ENCODE measurements at regions of chr17 and their contacts with region 1.

Region 1: DNA sequence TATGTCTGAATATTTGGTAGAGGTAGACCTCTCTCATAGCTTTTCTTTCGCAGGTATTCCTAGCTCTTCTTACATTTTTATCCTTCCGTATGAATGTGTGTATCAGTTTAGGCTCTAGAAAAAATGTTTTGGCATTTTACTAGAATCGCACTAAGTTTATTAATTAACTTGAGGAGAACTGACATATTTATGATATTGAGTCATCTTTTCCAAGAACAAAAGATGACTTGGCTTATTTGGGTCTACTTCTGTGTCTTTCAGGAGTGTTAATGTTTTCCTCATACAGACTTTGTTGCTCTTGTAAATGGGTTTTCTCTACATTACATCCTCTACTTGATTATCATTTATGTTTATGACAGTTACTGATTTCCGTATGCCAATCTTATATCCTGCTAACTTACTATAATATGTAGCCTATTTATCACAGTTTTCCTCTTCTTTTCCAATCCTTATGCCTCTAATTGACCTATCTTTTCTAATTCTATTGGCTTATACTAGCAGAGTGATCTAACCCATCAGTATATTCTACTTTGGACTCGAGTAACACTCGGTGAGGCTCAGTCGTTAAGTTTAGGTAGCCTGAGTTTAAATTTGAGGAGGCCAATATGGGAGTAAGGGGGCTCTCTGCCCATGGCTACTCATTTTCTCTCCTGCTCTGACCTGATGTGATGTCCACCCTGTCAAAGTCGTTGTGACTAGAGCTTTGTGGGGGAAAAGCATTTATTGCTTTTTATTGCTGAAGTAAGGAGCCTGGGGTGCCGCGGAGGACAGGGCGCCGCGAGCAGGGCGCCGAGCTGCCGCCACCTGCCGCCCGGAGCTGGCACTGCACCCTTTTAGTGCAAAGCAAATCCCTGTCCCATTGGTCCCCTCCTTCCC is 20.0 kb downstream of the ST6GALNAC1 start:
- DNase-seq: peak; percentile 63
- ATAC-seq: peak; percentile 99
- H3K4me3 ChIP-seq: peak overlapping the region; percentile 38 to 47
- H3K27ac ChIP-seq: peak overlapping the region; percentile 1; the same call in 1 of the 2 replicates
- H3K4me1 ChIP-seq: peaks cover 9 to 12% of the 10 kb centered on the region in 2 experiments
- H3K27me3 ChIP-seq: no peaks in the 10 kb centered on the region
- CTCF ChIP-seq: peak; percentile 93 to 99 (median 97)
- POLR2A ChIP-seq: no peak
- RAD21 ChIP-seq: peak; percentile 95

Region 2: DNA sequence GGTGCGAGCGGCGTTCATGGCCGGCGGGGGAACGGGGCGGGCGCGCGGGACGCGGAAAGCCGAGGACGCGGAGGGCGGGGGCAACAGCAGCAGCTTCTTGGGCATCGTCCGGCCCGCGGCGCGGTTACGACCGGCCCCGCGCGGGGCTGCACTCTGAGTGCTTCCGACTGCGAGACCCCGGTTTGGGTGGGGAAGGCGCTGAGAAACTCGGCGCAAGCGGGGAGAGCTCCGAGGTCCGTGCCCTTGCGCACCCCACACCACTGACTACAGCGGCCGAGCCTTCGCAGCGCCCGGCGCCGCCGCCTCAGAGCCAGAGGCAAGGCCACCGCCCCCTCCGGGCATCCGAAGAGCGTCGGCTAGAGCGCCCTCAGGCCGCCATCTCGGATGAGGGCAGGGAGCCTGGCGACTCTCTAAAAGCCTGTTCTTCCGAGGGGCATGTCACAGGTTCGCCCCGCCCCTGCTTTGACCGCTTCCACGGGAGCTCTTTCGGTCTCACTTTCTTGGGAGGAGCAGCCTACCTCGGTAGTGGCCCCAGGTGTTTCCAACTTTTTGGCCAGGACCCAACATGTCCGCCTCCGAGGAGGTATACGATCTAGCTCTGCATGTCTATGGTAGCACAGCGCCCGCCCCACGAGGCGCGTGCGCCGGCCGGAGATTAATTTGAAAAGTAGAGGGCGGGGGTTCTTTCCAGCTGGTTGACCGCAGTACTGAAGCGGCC is 269.8 kb before region 1 on chr17 and contains the start of gene PRPSAP1:
- CTCF ChIA-PET with region 1: no interaction called
- POLR2A ChIA-PET with region 1: no interaction called
- RAD21 ChIA-PET with region 1: no interaction called
- intact Hi-C with region 1: no loop called
- DNase-seq: peak; percentile 93
- ATAC-seq: peak; percentile 96
- H3K4me3 ChIP-seq: peak within 1 kb of the TSS; percentile 93 to 99
- H3K27ac ChIP-seq: peak within 1 kb of the TSS; percentile 89
- H3K4me1 ChIP-seq: peaks cover 0 to 23% of the 10 kb centered on the region in 2 experiments; a peak in 2 of 4 replicates
- H3K27me3 ChIP-seq: no peaks in the 10 kb centered on the region
- CTCF ChIP-seq: peak in 1 of 3 experiments; percentile 62; a peak in 2 of 6 replicates
- POLR2A ChIP-seq: peak; percentile 97
- RAD21 ChIP-seq: no peak; the same call in 1 of the 2 replicates
- total RNA-seq, gene PRPSAP1: 81.4 TPM

Region 3: DNA sequence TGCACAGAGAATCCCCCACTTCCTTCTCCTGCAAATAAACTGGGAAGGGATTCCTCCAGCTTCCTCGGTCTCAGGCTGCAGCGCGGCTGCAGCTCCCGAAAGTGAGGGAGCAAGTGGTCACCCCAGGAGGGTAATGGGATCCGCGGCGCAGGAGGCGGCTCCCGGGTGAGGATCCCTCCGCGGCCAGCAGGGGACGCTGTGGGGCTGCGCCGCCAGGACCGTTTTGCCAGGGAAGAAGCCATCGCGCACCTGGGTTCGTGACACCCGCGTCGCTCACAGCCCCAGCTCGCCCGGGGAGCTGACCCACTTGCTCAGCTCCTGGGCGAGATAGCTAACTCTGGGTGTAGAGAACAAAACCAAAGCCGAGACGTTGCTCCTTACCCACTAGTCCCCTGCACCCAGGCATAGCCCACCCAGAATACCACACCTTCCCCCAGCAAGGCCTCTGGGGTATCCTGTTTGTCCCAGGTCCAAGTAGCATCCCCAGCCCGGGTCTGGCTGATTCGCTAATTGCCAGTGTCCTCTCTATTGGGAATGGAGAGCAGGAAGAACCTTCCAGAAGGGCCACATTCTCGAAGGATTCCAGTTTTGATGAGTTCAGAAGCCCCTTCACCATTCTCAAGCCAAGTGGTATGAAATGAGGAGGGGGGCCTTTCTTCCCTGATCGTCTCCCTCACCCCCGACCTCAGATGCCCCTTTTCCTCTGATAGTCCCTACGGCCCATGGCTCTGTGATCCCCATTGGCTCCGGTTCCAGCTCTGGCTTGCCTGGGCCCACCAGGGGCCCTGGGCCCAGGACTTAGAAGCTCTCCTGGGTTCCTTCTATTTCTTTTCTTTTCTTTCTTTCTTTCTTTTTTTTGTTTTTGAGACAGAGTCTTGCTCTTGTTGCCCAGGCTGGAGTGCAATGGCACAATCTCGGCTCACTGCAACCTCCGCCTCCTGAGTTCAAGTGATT is 100.1 kb before region 1 on chr17:
- CTCF ChIA-PET with region 1: interaction called, 55 read pairs
- POLR2A ChIA-PET with region 1: interaction called, 5 read pairs
- RAD21 ChIA-PET with region 1: interaction called, 4 to 17 read pairs
- intact Hi-C with region 1: loop called (anchors 1 kb)
- DNase-seq: peak; percentile 58
- ATAC-seq: peak; percentile 97
- H3K4me3 ChIP-seq: peak overlapping the region; percentile 1 to 19; a peak in 3 of 4 replicates
- H3K27ac ChIP-seq: no peak overlapping the region
- H3K4me1 ChIP-seq: peaks cover 0 to 20% of the 10 kb centered on the region in 2 experiments; a peak in 3 of 4 replicates
- H3K27me3 ChIP-seq: no peaks in the 10 kb centered on the region
- CTCF ChIP-seq: peak; percentile 97 to 100 (median 100)
- POLR2A ChIP-seq: peak; percentile 28
- RAD21 ChIP-seq: peak; percentile 100

Region 4: DNA sequence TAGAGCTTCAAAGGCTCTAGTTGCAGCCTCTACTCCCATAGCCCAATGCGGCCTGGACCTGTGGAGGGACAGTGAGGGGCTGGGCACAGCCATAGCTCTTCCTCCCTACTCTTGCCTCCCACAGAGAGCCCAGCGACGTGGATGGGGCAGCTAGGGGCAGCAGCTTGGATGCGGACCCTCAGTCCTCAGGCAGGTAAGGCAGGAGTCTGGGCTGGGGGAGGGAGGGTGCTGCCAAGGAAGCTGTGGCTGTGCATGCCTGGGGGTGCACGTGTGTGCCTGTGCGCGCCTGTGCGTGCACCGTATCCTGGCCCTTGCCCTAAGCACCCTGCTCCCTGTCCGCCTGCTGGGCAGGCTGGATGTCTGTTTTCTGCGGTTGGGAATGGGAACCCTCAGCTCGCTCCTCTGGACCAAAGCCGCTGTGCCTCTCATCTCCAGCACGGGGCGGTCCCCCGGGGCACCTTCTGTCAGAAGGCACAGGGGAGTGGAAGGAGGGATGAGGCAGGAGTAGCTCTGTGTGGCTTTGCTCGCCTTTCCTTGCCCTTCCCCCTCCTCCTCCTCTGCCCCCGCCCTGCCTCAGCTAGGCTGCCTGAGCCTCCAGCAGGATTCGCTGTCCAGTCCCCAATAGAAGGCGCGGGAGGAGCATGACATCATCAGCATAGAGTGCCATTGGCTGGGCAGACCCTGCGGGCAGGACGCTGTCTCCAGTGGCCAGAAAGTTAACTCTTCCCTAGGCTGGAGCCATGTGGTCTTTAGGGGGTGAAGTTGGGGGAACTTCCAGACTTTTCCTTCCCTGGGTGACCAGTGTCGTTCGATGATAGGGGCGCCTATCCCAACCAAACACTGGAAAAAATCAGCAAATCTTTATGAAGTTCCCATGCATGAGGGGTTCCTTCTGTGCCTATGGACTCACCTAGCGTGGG is 82.9 kb before region 1 on chr17:
- CTCF ChIA-PET with region 1: interaction called, 11 read pairs
- POLR2A ChIA-PET with region 1: interaction called, 4 read pairs
- RAD21 ChIA-PET with region 1: no interaction called
- intact Hi-C with region 1: no loop called
- DNase-seq: peak; percentile 93
- ATAC-seq: peak; percentile 99
- H3K4me3 ChIP-seq: peak overlapping the region; percentile 51 to 57
- H3K27ac ChIP-seq: peak overlapping the region; percentile 61
- H3K4me1 ChIP-seq: peaks cover 8 to 16% of the 10 kb centered on the region in 2 experiments
- H3K27me3 ChIP-seq: no peaks in the 10 kb centered on the region
- CTCF ChIP-seq: peak in 2 of 3 experiments; percentile 29 to 32; a peak in 3 of 6 replicates
- POLR2A ChIP-seq: peak; percentile 34
- RAD21 ChIP-seq: no peak

Region 5: DNA sequence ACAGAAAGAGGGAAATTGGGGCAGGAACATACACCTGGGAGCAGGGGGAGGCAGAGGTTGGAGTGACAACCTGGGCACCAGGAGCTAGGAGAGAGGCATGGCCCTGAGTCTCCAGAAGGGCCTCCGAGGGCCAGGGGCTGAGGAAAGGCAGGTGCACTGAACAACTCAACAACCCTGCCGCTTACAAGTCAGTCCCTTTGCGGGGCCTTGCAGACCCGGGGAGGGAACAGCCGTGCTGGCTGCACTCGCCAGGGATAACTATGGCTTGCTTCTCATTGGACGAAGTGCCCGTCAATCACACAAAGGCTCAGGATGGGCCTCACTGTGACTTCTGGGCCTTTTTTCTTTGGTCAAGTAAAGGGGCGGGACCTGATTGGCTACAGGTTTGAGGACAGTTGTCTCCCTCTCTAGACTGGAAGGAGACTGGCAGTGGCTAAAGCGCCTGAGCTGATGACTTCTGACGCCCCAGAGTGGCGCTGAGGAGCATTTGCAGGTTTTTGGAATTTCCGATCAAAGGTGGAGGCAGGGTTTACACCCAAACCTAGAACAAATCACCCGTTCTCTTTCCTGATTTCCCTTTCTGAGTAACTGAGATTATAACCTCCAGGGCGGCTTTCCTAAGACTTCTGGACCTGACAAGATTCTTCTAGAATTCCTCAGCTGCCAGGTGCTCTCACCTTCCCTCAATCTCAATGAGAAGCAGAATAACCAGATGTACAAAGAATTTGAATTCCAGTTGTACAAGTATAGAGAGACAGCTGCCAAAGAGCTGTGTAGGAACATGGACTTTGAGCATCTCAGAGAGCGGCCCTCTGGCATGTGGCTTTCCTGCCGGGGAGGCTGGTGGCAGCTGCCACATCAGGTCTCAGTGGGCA is 10.3 kb before region 1 on chr17:
- CTCF ChIA-PET with region 1: interaction called, 60 read pairs
- POLR2A ChIA-PET with region 1: interaction called, 18 read pairs
- RAD21 ChIA-PET with region 1: interaction called in 1 of 2 experiments, 3 read pairs
- intact Hi-C with region 1: no loop called
- DNase-seq: peak; percentile 99
- ATAC-seq: peak; percentile 99
- H3K4me3 ChIP-seq: peak overlapping the region in 1 of 2 experiments; percentile 9; a peak in 1 of 4 replicates
- H3K27ac ChIP-seq: peak overlapping the region; percentile 43
- H3K4me1 ChIP-seq: peaks cover 16 to 29% of the 10 kb centered on the region in 2 experiments; a peak in 3 of 4 replicates
- H3K27me3 ChIP-seq: no peaks in the 10 kb centered on the region
- CTCF ChIP-seq: peak; percentile 62 to 99 (median 72)
- POLR2A ChIP-seq: no peak
- RAD21 ChIP-seq: peak; percentile 96

Region 6: DNA sequence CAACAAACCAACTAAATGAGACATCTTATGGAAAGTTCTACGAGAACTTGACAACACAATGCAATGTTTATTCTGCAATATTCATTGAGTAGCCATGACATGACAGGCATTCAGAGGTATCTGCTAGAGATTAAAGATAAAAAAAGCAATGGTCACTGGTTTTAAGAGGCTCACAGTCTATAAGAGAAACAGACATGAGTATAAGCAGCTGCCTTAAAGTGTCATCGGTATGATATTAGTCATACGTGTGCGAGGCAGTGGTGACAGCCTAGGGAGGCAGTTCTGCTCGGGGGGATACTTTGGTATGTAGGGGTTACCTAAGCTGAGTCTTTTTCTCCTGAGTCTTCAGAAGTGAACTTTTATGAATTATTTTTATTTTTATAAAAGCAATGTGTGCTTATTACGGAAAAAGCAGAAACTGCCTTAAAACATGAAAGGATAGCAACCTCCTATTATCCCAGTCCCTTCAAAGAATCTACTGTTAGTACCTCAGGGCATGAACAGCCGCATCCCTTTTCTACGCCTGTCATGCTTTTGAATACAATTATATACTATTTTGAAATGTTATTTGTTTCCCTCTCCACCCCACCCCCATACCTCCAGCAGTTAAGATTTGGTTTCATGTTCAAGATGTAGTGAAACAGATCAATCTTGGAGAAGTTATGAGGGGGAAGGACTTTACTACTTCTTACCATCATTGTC is 12.3 kb after region 1 on chr17:
- CTCF ChIA-PET with region 1: interaction called, 12 read pairs
- POLR2A ChIA-PET with region 1: no interaction called
- RAD21 ChIA-PET with region 1: no interaction called
- intact Hi-C with region 1: no loop called
- DNase-seq: no peak
- ATAC-seq: no peak
- H3K4me3 ChIP-seq: no peak overlapping the region
- H3K27ac ChIP-seq: no peak overlapping the region
- H3K4me1 ChIP-seq: peaks cover 0 to under 1% of the 10 kb centered on the region in 2 experiments; a peak in 1 of 4 replicates
- H3K27me3 ChIP-seq: no peaks in the 10 kb centered on the region
- CTCF ChIP-seq: no peak
- POLR2A ChIP-seq: no peak
- RAD21 ChIP-seq: no peak

Region 7: GRCh38 chr17:76671123-76671911 is 47.8 kb after region 1 on chr17:
- CTCF ChIA-PET with region 1: interaction called, 10 read pairs
- POLR2A ChIA-PET with region 1: interaction called, 15 read pairs
- RAD21 ChIA-PET with region 1: interaction called in 1 of 2 experiments, 3 read pairs
- intact Hi-C with region 1: no loop called
- DNase-seq: peak; percentile 100
- ATAC-seq: peak; percentile 97
- H3K4me3 ChIP-seq: peak overlapping the region; percentile 80 to 82
- H3K27ac ChIP-seq: peak overlapping the region; percentile 79
- H3K4me1 ChIP-seq: peaks cover 21% of the 10 kb centered on the region in 2 experiments
- H3K27me3 ChIP-seq: no peaks in the 10 kb centered on the region
- CTCF ChIP-seq: no peak
- POLR2A ChIP-seq: peak; percentile 64
- RAD21 ChIP-seq: no peak

Region 8: DNA sequence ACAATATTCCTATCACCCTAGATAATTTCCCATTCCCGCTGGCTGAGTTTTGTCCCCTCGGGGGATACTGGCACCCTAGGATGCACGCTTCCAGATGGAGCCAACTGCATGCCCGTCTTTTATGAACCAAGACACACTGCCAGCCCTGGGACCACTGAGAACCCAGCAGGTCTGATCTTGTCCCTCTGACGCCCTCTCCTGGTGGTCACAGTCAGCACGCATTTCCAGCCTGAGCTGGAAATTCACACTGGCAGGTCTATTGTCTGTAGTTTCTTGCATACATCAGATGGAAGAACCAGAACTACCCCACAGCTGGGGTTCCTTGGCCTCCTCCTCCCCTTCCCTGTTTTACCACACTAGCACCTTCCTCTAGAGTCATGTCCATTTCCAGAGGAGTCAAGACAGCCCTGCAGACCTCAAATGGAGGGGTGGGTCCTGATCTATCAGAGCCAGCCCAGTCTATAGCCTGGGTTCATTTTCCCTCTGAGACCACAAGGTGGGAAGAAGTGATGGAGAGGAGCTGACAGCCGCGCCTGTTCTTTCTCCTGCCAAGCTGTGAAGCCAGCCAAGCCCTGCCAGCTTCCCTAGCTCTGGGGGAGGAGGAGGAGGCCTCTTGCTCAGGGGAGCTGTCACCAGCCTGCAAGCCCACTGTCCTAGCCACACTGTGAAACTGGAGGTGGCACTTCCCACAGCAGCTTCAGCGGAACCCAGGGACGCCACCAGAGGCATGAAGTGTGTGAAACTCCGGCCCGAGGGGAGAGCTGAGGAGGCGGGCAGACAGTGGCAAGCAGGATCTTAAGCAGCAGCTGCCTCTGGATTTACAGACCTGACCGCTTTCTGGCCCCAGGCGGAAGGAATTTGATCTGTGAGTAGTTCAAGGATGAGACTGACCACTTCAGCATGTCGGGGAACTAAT is 58.0 kb after region 1 on chr17:
- CTCF ChIA-PET with region 1: interaction called, 12 read pairs
- POLR2A ChIA-PET with region 1: no interaction called
- RAD21 ChIA-PET with region 1: interaction called in 1 of 2 experiments, 3 read pairs
- intact Hi-C with region 1: no loop called
- DNase-seq: peak; percentile 56
- ATAC-seq: peak; percentile 89
- H3K4me3 ChIP-seq: no peak overlapping the region
- H3K27ac ChIP-seq: no peak overlapping the region
- H3K4me1 ChIP-seq: no peaks in the 10 kb centered on the region
- H3K27me3 ChIP-seq: no peaks in the 10 kb centered on the region
- CTCF ChIP-seq: peak; percentile 90 to 99 (median 96)
- POLR2A ChIP-seq: no peak
- RAD21 ChIP-seq: peak; percentile 91

Measured in HCT116 (cell line).